IMR-90 (cell line): ENCODE measurements at regions of chr4 and their contacts with region 1.

Region 1: GRCh38 chr4:155667568-155668511 is 1.2 kb downstream of the GUCY1A1 start:
- DNase-seq: peak; percentile 27
- ATAC-seq: peak; percentile 86
- H3K4me3 ChIP-seq: peak overlapping the region; percentile 86
- H3K27ac ChIP-seq: peak overlapping the region; percentile 36; the same call in 1 of the 2 replicates
- H3K4me1 ChIP-seq: no peaks in the 10 kb centered on the region
- H3K27me3 ChIP-seq: peaks cover 27% of the 10 kb centered on the region
- CTCF ChIP-seq: no peak
- POLR2A ChIP-seq: no peak
- RAD21 ChIP-seq: no peak

Region 2: DNA sequence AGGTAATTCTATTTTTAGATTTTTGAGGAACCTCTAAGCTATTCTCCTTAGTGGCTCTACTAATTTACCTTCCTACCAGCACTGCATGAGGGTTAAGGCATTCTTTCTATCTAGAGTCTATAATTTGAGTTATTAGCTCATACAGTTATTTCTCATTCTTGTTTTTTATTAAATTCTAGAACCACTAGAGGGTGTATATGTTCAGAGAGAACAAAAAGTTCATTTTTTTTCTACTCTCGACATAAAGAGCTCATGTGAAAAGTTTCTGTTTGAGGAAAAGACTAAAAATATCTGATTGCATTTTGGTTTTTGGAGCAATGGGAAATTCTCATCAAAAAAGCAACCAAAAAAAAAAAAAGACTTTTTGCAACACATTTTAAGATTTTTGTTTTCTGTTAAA is 981.0 kb before region 1 on chr4:
- CTCF ChIA-PET with region 1: no interaction called
- POLR2A ChIA-PET with region 1: no interaction called
- dilution Hi-C with region 1: no loop called
- in situ Hi-C with region 1: no loop called
- intact Hi-C with region 1: no loop called
- DNase-seq: no peak
- ATAC-seq: no peak
- H3K4me3 ChIP-seq: no peak overlapping the region
- H3K27ac ChIP-seq: no peak overlapping the region
- H3K4me1 ChIP-seq: no peaks in the 10 kb centered on the region
- H3K27me3 ChIP-seq: no peaks in the 10 kb centered on the region
- CTCF ChIP-seq: 0 out of 2 replicates have a peak, but pooled peaks have one; percentile 2
- POLR2A ChIP-seq: no peak
- RAD21 ChIP-seq: no peak

Region 3: GRCh38 chr4:155769090-155769489 is 101.2 kb after region 1 on chr4:
- CTCF ChIA-PET with region 1: no interaction called
- POLR2A ChIA-PET with region 1: no interaction called
- dilution Hi-C with region 1: no loop called
- in situ Hi-C with region 1: no loop called
- intact Hi-C with region 1: loop called (anchors 5 kb)
- DNase-seq: peak; percentile 73
- ATAC-seq: peak; percentile 90
- H3K4me3 ChIP-seq: no peak overlapping the region
- H3K27ac ChIP-seq: no peak overlapping the region
- H3K4me1 ChIP-seq: peaks cover 3% of the 10 kb centered on the region
- H3K27me3 ChIP-seq: no peaks in the 10 kb centered on the region
- CTCF ChIP-seq: no peak
- POLR2A ChIP-seq: no peak
- RAD21 ChIP-seq: no peak

Region 4: GRCh38 chr4:156401371-156401770 is 733.5 kb after region 1 on chr4:
- CTCF ChIA-PET with region 1: no interaction called
- POLR2A ChIA-PET with region 1: no interaction called
- dilution Hi-C with region 1: no loop called
- in situ Hi-C with region 1: no loop called
- intact Hi-C with region 1: no loop called
- DNase-seq: no peak
- ATAC-seq: no peak
- H3K4me3 ChIP-seq: no peak overlapping the region
- H3K27ac ChIP-seq: no peak overlapping the region
- H3K4me1 ChIP-seq: no peaks in the 10 kb centered on the region
- H3K27me3 ChIP-seq: no peaks in the 10 kb centered on the region
- CTCF ChIP-seq: no peak
- POLR2A ChIP-seq: no peak
- RAD21 ChIP-seq: no peak